ENCODE measurements at regions of chr2 and their contacts with region 1.

Region 1: GRCh38 chr2:130377491-130377890 is 21.6 kb downstream of the PTPN18 start:
- DNase-seq: no peak
- H3K4me3 Mint-ChIP-seq: no peak overlapping the region
- H3K27ac Mint-ChIP-seq: peak overlapping the region; percentile 55
- H3K4me1 Mint-ChIP-seq: peaks cover 80% of the 10 kb centered on the region
- H3K27me3 Mint-ChIP-seq: no peaks in the 10 kb centered on the region

Region 2: GRCh38 chr2:130334026-130334425 is 43.5 kb before region 1 on chr2:
- CTCF ChIA-PET with region 1: no interaction called
- POLR2A ChIA-PET with region 1: no interaction called
- DNase-seq: peak; percentile 1
- H3K4me3 Mint-ChIP-seq: no peak overlapping the region
- H3K27ac Mint-ChIP-seq: no peak overlapping the region
- H3K4me1 Mint-ChIP-seq: peaks cover 19% of the 10 kb centered on the region
- H3K27me3 Mint-ChIP-seq: peaks cover 21% of the 10 kb centered on the region

Region 3: GRCh38 chr2:130388221-130388907 is 10.9 kb after region 1 on chr2:
- CTCF ChIA-PET with region 1: interaction called, 10 read pairs
- POLR2A ChIA-PET with region 1: interaction called, 3 read pairs
- DNase-seq: no peak
- H3K4me3 Mint-ChIP-seq: no peak overlapping the region
- H3K27ac Mint-ChIP-seq: no peak overlapping the region
- H3K4me1 Mint-ChIP-seq: peaks cover 27% of the 10 kb centered on the region
- H3K27me3 Mint-ChIP-seq: peaks cover 5% of the 10 kb centered on the region

Measured in activated CD4-positive, alpha-beta T cell treated with anti-CD3 and anti-CD28 coated beads, Interleukin-2, amount 10 ng/mL, durations not matched to agents 7 days and 5 days (primary cell).